GM10248 (cell line): ENCODE measurements at regions of chr11 and their contacts with region 1.

Region 1: GRCh38 chr11:117426269-117426685 is 98.6 kb downstream of the CEP164 start:
- DNase-seq: peak; percentile 85
- CTCF ChIP-seq: peak; percentile 95

Region 2: DNA sequence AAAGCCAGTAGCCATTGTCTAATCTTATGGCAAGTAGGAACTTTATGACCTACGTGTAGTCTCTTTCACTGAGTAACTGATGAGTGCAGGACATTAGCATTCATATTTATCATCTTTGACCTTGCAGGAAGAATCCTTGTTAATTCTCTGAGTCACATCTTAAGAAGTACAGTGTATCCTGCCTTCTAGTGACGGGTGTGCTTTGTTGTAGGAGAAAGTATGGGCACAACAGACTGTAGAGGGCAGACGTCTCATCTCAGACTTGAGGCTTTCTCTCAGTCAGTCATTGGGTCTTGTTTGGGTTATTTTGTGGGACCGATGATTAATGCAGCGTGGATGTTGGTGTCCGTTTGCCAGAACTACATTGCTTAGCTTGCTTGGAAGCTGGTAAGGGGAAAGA is 187.0 kb before region 1 on chr11:
- CTCF ChIA-PET with region 1: no interaction called
- POLR2A ChIA-PET with region 1: no interaction called
- DNase-seq: no peak
- CTCF ChIP-seq: no peak

Region 3: DNA sequence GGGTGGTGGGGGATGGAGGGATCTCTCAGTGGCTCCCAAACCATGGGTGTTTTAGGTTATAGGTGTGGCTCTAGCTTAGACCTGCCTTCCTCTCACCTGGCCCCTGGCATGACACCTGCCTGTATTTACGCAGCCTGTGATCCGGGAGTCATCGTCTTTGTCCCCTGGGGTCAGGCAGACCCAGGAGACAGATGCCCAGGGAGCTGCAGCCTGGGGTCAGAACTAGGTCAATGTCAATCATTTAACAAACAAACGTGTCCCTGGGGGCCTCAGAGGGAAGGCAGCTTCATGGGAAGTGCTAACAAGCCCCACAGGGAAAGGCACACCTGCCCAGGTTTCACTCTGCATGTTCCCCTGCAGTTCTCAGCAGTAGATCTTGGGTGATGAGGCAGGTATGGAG is 123.2 kb before region 1 on chr11:
- CTCF ChIA-PET with region 1: no interaction called
- POLR2A ChIA-PET with region 1: no interaction called
- DNase-seq: no peak
- CTCF ChIP-seq: no peak

Region 4: DNA sequence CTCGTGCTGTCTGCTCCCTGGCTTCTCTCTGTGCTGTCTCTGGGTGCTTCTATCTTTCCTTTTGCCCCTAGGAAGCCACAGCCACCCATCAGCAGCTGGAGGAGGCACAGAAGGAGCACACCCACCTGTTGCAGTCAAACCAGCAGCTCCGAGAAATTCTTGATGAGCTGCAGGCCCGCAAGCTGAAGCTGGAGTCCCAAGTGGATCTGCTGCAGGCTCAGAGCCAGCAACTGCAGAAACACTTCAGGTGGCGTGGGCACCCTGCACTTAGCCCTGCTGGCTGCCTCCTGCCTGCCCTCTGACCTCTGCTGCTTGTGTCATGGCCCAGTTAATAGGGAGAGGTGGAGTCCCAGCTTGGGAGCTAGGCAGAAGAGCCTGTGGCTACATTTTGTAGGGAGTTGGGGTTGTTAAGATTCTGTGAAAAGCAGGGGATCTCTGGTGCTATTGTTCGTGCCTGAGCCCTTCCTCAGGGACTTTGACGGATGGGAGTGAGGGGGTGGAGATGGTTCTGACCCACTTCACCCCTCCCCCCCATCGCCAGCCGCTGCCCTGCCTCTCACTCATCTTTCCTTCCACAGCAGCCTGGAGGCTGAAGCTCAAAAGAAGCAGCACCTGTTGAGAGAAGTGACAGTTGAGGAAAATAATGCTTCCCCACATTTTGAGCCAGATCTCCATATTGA is 30.7 kb before region 1 on chr11:
- CTCF ChIA-PET with region 1: interaction called, 16 read pairs
- POLR2A ChIA-PET with region 1: no interaction called
- DNase-seq: no peak
- CTCF ChIP-seq: no peak

Region 5: GRCh38 chr11:117443266-117444195 is 17.3 kb after region 1 on chr11:
- CTCF ChIA-PET with region 1: interaction called, 31 read pairs
- POLR2A ChIA-PET with region 1: no interaction called
- DNase-seq: peak; percentile 66
- CTCF ChIP-seq: peak; percentile 58

Region 6: DNA sequence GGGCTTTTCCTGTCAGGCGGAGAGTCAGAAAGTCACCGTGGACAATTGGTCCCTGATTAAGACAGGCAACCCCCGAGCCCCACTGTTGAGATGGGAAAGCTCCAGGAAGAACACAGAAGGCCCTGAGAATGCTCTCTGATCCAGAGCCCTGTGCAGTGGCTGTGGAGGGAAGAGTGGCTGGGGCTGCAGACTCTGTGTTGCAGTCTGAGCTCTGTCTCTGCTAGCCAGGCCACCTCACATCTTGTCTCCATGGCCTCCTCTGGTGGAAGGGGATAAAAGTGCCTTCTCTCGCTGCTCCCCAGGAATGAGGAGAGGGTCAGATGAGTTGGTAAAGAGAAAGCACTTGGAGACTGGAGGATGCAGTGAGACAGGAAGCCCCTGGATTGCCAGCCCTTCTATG is 42.6 kb after region 1 on chr11:
- CTCF ChIA-PET with region 1: interaction called, 33 read pairs
- POLR2A ChIA-PET with region 1: no interaction called
- DNase-seq: no peak
- CTCF ChIP-seq: no peak

Region 7: DNA sequence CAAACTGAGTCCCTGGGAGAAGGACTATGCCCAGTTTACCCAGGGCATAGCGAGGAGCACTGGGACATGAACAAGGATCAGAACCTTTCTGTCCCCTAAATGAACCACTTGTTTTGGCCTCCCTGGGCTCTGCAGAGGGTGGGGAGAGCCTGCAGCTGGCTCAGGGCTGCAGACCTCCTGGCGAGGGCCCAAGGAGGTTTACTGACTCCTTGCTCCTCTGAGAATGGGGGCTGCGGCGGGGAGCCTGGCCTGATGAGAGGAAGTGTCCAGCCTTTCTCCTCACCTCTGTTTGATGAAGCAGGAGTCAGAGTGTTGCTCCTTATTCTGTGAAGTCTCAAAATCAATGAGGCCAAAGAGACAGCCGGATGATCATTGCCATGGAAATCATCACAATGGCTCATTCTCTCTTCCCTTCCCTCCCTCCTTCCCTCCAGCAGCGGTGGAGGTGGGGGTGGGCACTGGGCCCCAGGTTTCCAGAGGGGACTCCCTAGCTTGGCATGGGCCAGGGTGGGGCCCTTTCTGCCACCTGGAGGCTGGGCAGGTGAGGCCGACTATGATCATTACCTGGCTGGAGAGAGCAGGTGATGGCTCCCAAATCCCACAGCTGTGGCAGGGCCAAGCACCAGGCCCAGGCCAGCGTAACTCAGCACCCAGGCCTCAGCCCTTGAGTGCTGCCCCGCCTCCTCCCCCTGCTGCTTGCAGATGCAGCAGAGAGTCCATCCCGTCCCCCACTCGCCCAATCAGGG is 71.1 kb after region 1 on chr11:
- CTCF ChIA-PET with region 1: interaction called, 13 read pairs
- POLR2A ChIA-PET with region 1: no interaction called
- DNase-seq: no peak
- CTCF ChIP-seq: no peak

Region 8: DNA sequence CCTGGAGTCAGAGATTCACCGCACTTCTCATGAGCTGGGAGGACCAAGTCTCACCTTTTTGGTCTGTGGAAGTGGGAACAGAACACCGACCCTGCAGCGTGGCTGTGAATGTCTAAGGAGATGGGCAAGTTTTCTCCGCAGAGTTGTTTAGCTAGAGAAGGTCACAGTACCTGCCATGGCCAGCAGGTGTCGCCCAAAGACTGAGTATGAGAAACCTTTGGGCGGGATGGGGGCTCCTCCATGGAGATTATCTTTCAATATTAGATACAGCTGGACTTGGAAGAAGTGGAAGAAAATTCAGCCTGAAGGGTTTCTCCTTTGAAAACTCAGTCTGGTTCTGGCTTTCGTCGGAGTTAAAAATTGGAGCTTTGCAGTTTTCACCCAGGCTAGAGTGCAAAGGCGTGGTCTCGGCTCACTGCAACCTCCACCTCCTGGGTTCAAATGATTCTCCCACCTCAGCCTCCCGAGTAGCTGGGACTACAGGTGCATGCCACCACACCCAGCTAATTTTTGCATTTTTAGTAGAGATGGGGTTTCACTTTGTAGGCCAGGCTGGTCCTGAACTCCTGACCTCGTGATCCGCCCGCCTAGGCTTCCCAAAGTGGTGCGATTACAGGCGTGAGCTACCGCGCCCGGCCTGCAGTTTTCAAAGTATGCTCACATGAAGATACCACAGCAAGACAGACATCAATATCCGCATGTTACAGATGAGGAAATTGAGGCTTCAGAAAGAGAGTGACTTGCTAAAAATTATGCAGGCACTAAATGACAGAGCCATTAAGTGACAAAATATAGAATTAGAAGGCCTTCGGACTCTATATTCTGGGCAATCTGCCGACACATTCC is 381.4 kb after region 1 on chr11:
- CTCF ChIA-PET with region 1: interaction called, 19 read pairs
- POLR2A ChIA-PET with region 1: no interaction called
- DNase-seq: peak; percentile 78
- CTCF ChIP-seq: peak; percentile 87